MCF 10A (cell line): ENCODE measurements at regions of chr22 and their contacts with region 1.

Region 1: DNA sequence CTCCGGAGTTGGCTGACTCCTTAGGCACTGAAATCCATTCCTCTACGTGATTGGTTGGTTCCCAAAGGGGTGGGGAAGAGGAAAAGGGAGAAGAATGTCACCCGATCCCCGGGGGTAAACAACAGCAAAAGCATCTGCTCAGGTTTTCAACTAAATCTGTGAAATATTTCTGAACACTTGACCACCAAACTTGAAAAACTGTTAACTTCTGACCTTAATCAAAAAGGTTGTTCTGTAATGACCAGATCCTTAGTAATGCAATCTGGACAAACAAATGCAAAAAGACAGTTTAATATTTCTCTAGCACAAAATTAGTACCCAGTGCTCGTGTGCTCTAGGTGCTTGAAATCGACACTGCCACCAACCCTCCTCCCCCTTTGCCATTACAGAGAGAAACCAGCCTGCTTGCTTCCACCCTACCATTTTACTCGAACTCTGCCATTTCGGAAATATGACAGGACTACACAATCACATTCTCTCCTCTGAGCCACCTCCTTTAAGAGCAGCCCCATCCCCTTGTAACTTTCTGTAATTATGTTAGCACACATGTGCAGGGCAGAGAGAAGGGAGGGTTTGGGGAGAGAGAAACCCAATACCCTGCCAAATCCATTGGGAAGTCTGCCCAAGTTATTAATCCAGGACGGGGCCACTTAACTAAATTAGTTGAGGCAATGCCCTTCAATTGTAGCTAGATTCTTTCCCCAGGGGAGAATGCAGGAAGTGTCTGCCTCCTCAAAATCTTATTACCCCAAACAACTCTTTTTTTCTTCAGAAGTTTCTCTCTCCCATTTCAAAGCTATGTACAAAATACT is 113.8 kb downstream of the RBFOX2 start:
- DNase-seq: peak; percentile 95
- H3K4me3 Mint-ChIP-seq: peak overlapping the region; percentile 75
- H3K27ac Mint-ChIP-seq: peak overlapping the region; percentile 91
- H3K4me1 Mint-ChIP-seq: peaks cover 53% of the 10 kb centered on the region
- H3K27me3 Mint-ChIP-seq: no peaks in the 10 kb centered on the region
- CTCF ChIP-seq: no peak

Region 2: DNA sequence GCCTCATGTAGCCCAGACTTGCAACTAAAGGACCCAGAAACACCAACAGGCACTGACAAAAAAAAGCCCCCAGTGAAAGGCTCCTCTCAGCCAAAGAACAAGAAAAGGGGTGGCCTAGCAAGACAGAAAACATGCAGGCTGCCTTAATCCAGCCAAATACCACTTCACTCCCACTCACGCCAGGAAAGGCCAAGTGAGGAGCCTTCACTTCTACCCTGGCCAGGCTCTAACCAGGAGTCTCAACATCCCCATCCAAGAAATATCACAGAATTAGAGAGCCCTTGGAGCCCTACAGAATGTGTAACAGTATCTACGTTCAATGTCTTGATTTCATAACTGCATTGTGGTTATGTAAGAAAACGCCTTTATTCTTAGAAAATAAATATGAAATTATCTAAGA is 48.2 kb before region 1 on chr22:
- CTCF ChIA-PET with region 1: no interaction called
- POLR2A ChIA-PET with region 1: no interaction called
- intact Hi-C with region 1: no loop called
- DNase-seq: no peak
- H3K4me3 Mint-ChIP-seq: no peak overlapping the region
- H3K27ac Mint-ChIP-seq: no peak overlapping the region
- H3K4me1 Mint-ChIP-seq: peaks cover 18% of the 10 kb centered on the region
- H3K27me3 Mint-ChIP-seq: no peaks in the 10 kb centered on the region
- CTCF ChIP-seq: no peak

Region 3: GRCh38 chr22:35883031-35883620 is 31.7 kb before region 1 on chr22:
- CTCF ChIA-PET with region 1: no interaction called
- POLR2A ChIA-PET with region 1: interaction called, 3 read pairs
- intact Hi-C with region 1: loop called (anchors 1 kb)
- DNase-seq: peak; percentile 58
- H3K4me3 Mint-ChIP-seq: no peak overlapping the region
- H3K27ac Mint-ChIP-seq: peak overlapping the region; percentile 38
- H3K4me1 Mint-ChIP-seq: peaks cover 34% of the 10 kb centered on the region
- H3K27me3 Mint-ChIP-seq: no peaks in the 10 kb centered on the region
- CTCF ChIP-seq: no peak

Region 4: GRCh38 chr22:35894937-35895708 is 19.7 kb before region 1 on chr22:
- CTCF ChIA-PET with region 1: interaction called, 32 read pairs
- POLR2A ChIA-PET with region 1: interaction called, 115 read pairs
- intact Hi-C with region 1: no loop called
- DNase-seq: peak; percentile 96
- H3K4me3 Mint-ChIP-seq: peak overlapping the region; percentile 79
- H3K27ac Mint-ChIP-seq: peak overlapping the region; percentile 90
- H3K4me1 Mint-ChIP-seq: peaks cover 42% of the 10 kb centered on the region
- H3K27me3 Mint-ChIP-seq: no peaks in the 10 kb centered on the region
- CTCF ChIP-seq: no peak

Region 5: GRCh38 chr22:35900483-35901168 is 14.2 kb before region 1 on chr22:
- CTCF ChIA-PET with region 1: interaction called, 32 read pairs
- POLR2A ChIA-PET with region 1: interaction called, 115 read pairs
- intact Hi-C with region 1: no loop called
- DNase-seq: peak; percentile 54
- H3K4me3 Mint-ChIP-seq: no peak overlapping the region
- H3K27ac Mint-ChIP-seq: peak overlapping the region; percentile 25
- H3K4me1 Mint-ChIP-seq: peaks cover 43% of the 10 kb centered on the region
- H3K27me3 Mint-ChIP-seq: no peaks in the 10 kb centered on the region
- CTCF ChIP-seq: no peak